Activated CD4-positive, alpha-beta memory T cell treated with anti-CD3 and anti-CD28 coated beads for 36 hours (primary cell): ENCODE measurements at regions of chr6 and their contacts with region 1.

Region 1: GRCh38 chr6:137823826-137824555 is 43.1 kb upstream of the TNFAIP3 start:
- DNase-seq: peak; percentile 83
- H3K4me3 Mint-ChIP-seq: peak overlapping the region; percentile 70
- H3K27ac Mint-ChIP-seq: peak overlapping the region; percentile 96
- H3K4me1 Mint-ChIP-seq: peaks cover 83% of the 10 kb centered on the region
- H3K27me3 Mint-ChIP-seq: no peaks in the 10 kb centered on the region

Region 2: DNA sequence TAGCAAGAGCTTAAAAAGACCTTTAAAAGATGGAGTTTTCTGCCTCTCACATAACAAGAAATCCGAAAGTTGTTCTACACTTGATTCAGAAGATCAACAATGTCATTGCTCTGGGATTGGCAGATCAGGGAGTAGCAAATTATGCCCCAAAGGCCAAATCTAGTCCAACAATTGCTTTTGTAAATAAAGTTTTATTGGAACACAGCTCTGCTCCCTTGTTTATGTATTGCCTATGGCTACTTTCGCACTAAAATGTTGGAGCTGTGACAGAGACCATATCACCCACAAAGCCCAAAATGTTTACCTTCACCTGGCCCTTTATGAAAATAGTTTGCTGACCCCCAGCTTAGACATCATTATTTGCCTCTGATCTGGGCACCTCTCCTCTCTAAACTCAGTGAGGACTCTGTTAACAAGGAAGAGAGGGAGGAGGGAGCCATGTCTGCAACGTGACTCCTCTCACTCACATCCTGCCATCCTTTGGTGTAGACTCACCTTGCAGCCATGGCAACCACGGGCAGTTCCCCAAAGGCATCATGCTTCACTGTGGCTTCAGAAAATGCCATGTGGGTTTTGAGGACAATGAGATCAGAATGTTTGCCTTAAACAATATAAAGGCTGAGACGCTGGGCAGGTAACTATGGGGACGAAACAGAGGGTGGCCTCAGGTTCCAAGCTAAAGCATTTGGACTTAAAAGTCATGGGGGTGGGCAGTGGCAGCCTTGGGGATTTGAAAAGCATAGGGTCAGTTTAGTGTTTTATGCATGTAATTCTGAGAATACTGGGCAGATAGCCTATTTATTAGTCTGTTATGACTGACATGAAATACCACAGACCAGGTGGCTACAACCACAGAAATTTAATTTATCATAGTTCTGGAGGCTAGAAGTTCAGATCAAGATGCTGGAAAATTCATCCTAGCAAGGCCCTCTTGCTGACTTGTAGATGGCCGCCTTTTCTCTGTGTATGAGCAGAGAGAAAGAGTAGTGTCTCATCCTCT is 106.6 kb before region 1 on chr6:
- CTCF ChIA-PET with region 1: interaction called, 3 read pairs
- POLR2A ChIA-PET with region 1: no interaction called
- intact Hi-C with region 1: loop called (anchors 1 kb)
- DNase-seq: peak; percentile 90
- H3K4me3 Mint-ChIP-seq: no peak overlapping the region
- H3K27ac Mint-ChIP-seq: peak overlapping the region; percentile 69
- H3K4me1 Mint-ChIP-seq: peaks cover 47% of the 10 kb centered on the region
- H3K27me3 Mint-ChIP-seq: no peaks in the 10 kb centered on the region

Region 3: DNA sequence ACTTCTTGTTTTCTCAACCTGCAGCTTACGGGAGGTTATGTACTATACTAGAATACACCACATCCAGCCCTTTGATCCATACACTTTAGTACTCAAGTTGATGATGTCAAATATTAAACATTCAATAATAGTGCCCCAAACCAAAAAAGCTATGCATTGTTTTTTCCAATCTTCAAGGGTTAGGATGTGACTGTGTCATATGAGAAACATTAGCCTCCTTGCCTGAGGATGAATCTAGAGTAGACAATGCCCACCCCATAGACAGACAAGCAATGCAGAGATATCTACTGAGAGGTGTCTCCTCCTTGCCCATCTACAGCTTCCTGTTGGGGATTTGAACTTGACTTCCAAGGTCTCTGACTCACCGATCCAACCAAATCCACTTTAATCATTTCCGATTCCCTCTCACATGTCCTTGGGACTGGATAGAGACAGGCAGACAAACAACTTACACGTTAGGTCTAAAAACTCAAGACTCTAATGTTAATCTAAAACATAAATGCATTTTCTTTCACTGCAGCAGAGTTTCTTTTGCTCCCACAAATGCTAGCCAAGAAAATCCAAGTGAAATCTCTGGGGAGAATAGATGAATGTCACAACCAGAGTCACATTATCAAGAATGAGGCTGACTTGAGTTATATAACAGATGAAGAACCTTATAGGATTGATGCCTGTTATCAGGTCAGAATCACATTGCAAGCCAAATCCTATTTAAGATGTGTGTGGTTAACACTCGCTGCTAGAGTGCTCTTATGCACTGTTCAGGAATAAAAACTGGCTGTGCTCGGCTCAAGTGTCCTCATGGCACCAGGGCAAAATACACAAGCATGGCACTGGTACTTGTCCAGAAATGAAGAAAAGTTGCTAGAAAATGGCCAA is 32.5 kb before region 1 on chr6:
- CTCF ChIA-PET with region 1: interaction called, 3 read pairs
- POLR2A ChIA-PET with region 1: no interaction called
- intact Hi-C with region 1: loop called (anchors 2 kb)
- DNase-seq: no peak
- H3K4me3 Mint-ChIP-seq: peak overlapping the region; percentile 62
- H3K27ac Mint-ChIP-seq: peak overlapping the region; percentile 59
- H3K4me1 Mint-ChIP-seq: peaks cover 53% of the 10 kb centered on the region
- H3K27me3 Mint-ChIP-seq: no peaks in the 10 kb centered on the region

Region 4: DNA sequence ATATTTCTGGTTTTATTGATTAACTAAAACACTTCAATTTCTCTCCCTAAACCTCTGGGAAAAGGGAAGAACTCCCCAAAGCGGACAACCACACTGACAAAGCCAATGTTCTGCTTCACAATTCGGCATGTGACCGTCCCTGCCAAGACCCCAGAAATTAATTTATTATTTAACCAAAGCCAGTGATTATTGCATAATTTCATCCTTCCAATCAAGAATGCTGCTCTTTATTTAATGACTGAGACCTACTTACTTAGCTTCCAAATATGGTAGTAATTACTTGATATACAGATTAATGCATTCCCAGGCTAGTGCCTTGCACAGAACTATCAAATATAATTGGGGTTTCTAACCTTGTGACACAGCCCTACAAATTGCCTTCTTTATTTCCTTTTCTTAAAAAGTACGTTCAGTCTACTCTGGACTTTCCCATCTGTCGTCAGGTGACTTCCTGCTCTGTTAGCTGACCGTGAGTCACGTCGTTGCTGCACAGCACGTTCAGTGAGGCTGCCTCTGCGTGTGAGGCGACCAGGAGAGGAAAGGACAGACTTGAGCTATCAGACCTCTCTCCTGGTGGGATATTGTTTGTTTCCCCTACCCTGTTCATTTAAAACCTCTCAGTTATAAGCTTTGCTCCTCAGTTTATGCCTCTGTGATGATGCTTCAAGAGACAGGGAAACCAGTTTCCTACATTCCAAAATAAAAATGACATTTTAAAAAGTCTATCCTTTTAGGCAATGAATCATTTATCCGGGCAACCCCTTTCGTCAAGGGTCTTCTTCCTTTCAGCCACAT is 12.7 kb before region 1 on chr6:
- CTCF ChIA-PET with region 1: interaction called, 6 read pairs
- POLR2A ChIA-PET with region 1: interaction called, 5 read pairs
- intact Hi-C with region 1: loop called (anchors 1 kb)
- DNase-seq: peak; percentile 90
- H3K4me3 Mint-ChIP-seq: peak overlapping the region; percentile 36
- H3K27ac Mint-ChIP-seq: peak overlapping the region; percentile 91
- H3K4me1 Mint-ChIP-seq: peaks cover 66% of the 10 kb centered on the region
- H3K27me3 Mint-ChIP-seq: no peaks in the 10 kb centered on the region